Activated CD4-positive, alpha-beta T cell treated with anti-CD3 and anti-CD28 coated beads, Interleukin-2, amount 10 ng/mL, durations not matched to agents 24 days and 14 days (primary cell): ENCODE measurements at regions of chr11 and their contacts with region 1.

Region 1: GRCh38 chr11:66408488-66409214 is 12.2 kb upstream of the NPAS4 start:
- DNase-seq: peak; percentile 98
- H3K4me3 Mint-ChIP-seq: peak overlapping the region; percentile 88
- H3K27ac Mint-ChIP-seq: peak overlapping the region; percentile 74
- H3K4me1 Mint-ChIP-seq: peaks cover 8% of the 10 kb centered on the region
- H3K27me3 Mint-ChIP-seq: peaks cover 18% of the 10 kb centered on the region

Region 2: DNA sequence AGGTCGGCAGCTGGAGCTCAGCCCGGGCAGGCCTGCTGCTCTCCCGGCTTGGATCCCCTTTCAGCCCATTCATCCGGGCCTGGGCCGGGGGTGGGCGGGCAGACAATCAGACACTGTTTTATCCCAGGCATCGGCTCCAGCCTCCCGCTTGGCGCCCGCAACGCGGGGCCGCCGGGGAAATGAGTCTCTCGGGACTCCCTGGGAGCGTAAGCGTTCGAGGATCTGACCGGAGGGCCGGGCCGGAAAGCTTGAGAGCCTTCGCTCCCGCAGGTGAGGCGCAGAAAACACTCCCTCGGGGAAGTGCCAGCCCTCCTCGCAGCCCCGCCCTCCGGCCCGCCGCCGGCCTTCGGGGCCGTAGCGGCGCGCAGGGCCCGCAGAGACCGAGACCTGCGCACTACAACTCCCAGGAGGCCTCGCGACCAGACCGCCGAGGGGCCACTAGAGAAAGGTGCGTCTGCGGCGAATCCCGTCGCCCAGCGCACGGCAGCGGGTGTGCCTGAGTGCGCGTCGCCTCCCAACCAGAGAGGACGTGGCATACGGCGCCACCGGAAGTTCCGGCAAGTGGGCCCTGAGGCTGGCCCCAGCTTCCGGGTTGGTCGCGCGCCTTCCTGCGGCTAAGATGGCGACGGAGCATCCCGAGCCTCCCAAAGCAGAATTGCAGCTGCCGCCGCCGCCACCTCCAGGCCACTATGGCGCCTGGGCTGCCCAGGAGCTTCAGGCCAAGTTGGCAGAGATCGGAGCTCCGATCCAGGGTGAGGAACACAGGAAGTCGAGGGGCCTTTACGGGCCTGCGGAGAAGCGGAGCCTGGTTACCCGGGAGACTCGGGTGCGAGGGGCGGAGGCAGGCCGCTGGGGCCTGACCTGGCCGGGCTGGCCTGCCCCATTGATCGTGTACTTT is 356.6 kb before region 1 on chr11 and contains the start of gene SF3B2:
- intact Hi-C with region 1: no loop called
- DNase-seq: peak; percentile 99
- H3K4me3 Mint-ChIP-seq: peak within 1 kb of the TSS; percentile 88
- H3K27ac Mint-ChIP-seq: peak within 1 kb of the TSS; percentile 97
- H3K4me1 Mint-ChIP-seq: peaks cover 21% of the 10 kb centered on the region
- H3K27me3 Mint-ChIP-seq: peaks cover 6% of the 10 kb centered on the region
- total RNA-seq, gene SF3B2: 283 and 284 TPM in 2 replicates

Region 3: GRCh38 chr11:66216911-66217310 is 191.7 kb before region 1 on chr11:
- intact Hi-C with region 1: no loop called
- DNase-seq: no peak
- H3K4me3 Mint-ChIP-seq: no peak overlapping the region
- H3K27ac Mint-ChIP-seq: no peak overlapping the region
- H3K4me1 Mint-ChIP-seq: peaks cover 11% of the 10 kb centered on the region
- H3K27me3 Mint-ChIP-seq: no peaks in the 10 kb centered on the region

Region 4: DNA sequence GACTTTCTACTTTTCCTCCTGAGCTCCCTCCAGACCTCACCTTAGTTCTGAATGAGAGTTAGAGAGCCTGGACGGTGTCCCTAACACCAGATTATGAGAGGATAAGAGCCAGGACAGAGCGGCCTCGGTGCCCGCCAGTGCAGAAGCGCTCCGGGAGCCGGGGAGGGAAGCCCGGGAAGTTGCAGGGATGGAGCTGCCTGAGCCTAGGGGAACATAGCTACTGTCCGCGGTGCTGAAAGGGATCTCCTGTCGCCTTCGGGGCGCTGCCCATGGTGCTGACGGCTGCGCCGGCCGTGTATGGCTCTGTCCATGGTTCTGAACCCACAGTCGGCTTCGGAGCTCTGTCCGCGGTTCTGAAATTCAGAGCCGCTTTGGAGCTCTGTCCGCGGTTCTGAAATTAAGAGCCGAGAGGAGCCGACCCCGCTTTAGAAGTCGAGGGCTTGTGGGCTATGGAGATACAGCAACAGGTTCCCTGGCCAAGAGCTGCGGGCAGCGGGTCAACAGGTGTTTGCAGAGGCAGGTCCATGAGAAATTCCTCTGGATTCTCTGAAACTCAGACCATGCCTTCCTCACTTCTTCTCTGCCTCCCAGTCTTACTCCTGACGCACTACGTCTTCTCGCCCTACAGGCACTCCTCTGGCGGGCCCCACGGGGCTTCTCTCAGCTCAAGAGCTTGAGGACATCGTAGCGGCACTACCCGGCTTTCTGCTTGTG is 13.0 kb after region 1 on chr11:
- intact Hi-C with region 1: loop called (anchors 1 kb)
- DNase-seq: peak; percentile 97
- H3K4me3 Mint-ChIP-seq: no peak overlapping the region
- H3K27ac Mint-ChIP-seq: peak overlapping the region; percentile 51
- H3K4me1 Mint-ChIP-seq: peaks cover 25% of the 10 kb centered on the region
- H3K27me3 Mint-ChIP-seq: peaks cover 18% of the 10 kb centered on the region

Region 5: DNA sequence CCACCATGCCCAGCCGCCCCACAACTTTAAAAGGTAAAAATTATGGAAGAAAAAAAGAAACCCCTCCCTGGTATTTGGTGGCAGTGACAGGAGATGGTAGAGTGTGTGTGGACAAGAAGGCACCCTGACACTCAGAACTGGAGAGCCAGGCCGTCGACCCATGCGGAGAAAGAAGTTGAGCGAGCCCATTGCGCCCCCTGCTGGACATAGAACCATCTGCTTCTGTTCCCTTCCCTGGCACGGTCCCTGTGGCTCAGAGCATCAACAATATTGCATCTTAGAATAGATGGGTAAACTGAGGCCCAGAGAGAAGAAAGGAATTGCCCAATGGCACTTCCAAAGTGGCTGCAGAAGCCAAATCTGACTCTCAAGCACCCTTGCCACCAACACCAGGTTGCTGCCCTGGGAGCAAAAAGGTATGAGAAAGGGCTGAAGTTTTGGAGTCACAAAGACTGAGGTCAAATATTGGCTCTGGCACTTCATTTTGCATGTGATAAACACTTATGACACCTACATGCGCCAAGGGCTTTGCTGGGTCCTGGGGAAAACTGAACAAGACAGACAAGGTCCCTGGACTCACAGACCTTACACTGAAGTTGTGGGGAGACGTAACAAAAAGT is 21.4 kb after region 1 on chr11:
- intact Hi-C with region 1: loop called (anchors 1 kb)
- DNase-seq: peak; percentile 92
- H3K4me3 Mint-ChIP-seq: no peak overlapping the region
- H3K27ac Mint-ChIP-seq: no peak overlapping the region
- H3K4me1 Mint-ChIP-seq: peaks cover 2% of the 10 kb centered on the region
- H3K27me3 Mint-ChIP-seq: no peaks in the 10 kb centered on the region